ENCODE measurements at regions of chr2 and their contacts with region 1.

Region 1: DNA sequence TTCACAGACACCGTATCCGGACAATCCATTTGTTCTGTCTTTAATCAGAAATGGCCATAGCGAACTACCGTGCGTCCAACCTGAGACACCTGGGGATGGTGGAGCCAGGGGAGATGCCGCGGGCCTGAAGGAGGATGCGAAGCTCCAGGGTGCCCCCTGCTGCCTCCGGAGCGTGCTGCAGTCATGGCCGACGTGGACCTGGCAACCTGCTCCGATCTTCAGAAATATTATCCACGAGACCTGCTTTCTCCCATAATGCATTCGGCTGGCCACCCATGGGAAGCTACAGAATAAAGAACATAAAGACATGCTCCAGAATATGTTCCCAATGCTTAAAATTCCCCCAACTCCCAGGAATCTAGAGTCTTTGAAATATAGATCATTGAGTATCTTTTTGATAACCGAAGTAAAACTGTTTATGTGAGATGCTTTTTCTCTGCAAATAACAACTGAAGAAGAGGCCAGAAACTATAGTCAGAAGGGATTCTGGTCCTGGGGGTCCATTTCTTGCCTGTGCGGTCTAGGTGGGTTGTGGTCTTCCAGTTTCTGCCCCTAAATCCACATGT is 30.7 kb upstream of the SLC66A3 start:
- DNase-seq: no peak
- H3K4me3 ChIP-seq: no peak overlapping the region
- H3K27ac ChIP-seq: no peak overlapping the region
- H3K27me3 ChIP-seq: no peaks in the 10 kb centered on the region
- CTCF ChIP-seq: peak; percentile 95

Region 2: DNA sequence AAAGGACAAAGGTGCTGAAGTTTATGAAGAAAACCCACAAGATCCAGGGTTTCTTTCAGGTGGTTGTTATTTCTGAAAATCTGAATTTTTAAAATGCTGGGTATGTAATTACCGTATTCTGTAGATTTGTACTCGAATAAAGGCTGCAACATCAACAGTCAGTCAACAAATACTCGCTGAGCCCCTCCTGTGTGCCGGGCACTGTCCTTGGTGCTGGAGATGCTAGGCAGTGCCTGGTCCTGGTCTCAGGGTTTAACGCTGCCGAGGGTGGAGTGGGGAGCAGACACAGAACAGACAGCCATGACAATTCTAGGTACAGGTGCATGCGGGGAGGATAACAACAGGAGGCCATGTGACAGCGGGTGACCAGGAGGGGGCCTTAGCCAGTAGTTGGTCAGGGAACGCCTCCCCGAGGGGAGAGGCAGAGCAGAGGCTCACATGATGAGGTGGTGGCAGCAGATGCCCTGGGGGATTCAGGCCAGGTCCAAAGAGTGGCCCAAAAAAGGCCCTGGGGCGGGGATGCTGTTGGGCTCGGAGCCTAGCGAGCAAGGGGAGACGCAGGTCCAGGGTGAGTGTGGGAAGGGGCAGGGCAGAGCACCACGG is 284.7 kb before region 1 on chr2:
- CTCF ChIA-PET with region 1: interaction called, 360 read pairs
- POLR2A ChIA-PET with region 1: no interaction called
- DNase-seq: no peak
- H3K4me3 ChIP-seq: no peak overlapping the region
- H3K27ac ChIP-seq: no peak overlapping the region
- H3K27me3 ChIP-seq: peaks cover 13% of the 10 kb centered on the region
- CTCF ChIP-seq: no peak

Region 3: DNA sequence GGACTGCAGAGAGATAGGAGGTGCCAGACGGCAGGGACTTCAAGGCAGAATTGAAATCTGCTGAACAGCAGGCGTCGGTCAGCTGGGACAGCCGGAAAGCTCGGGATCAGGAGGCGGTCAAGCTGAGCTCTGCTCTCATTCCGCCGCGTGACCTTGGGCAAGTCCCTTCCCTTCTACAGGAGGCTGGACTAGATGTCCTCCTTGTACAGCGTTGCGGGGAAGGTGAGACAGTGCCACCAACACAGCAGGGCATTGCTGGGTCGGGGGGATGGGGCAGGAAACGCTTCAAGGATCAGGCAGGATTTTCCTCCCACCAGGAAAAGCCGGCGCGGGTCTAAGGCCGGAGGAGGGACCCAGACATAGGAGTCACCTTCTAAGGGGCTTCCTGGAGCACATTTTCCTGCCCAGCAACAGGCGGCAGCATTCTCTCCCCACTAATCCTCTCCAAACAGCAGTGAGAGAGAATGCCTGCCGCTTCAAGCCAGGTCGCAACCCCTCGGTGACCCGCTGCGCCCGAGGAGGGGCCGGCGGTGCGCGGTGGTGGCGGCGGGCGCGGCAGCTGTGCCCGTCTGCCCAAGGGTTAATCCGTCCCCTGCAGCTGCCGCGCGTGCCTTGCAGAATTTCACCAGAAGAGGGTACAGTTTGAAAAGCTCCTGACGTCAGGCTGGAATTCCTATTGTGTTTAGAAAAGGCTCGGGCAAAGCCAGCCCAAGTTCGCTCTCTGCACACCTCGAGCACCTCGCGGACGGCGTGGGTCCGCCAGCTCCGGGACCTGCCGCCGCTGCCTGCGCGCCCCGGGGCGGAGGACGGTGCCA is 213.1 kb before region 1 on chr2 and contains the start of gene KCNF1:
- CTCF ChIA-PET with region 1: interaction called, 10 read pairs
- POLR2A ChIA-PET with region 1: interaction called, 3 read pairs
- DNase-seq: no peak
- H3K4me3 ChIP-seq: peak within 1 kb of the TSS; percentile 53
- H3K27ac ChIP-seq: no peak within 1 kb of the TSS
- H3K27me3 ChIP-seq: peaks cover 6% of the 10 kb centered on the region
- CTCF ChIP-seq: peak; percentile 40
- polyA plus RNA-seq, gene KCNF1: 1.0 and 1.1 TPM in 2 replicates

Region 4: DNA sequence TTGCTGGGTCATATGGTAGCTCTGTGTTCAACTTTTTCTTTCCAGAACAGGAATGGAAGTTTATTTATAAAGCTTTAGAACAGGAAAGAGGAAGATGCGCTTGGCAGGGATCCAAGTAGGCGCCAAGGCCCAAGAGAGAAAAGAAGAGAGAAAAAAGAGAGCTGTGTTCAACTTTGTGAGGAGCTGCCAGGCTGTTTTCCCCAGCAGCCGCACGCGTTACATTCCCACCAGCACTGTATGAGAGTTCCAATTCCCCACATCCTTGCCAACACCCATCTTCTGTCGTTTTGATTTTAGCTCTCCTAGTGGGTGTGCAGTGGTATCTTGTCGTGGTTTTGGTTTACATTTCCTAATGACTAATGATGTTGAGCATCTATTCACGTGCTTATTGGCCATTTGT is 161.4 kb before region 1 on chr2:
- CTCF ChIA-PET with region 1: no interaction called
- POLR2A ChIA-PET with region 1: no interaction called
- DNase-seq: no peak
- H3K4me3 ChIP-seq: no peak overlapping the region
- H3K27ac ChIP-seq: no peak overlapping the region
- H3K27me3 ChIP-seq: no peaks in the 10 kb centered on the region
- CTCF ChIP-seq: no peak

Region 5: GRCh38 chr2:11028406-11028916 is 96.1 kb before region 1 on chr2:
- CTCF ChIA-PET with region 1: no interaction called
- POLR2A ChIA-PET with region 1: no interaction called
- DNase-seq: no peak
- H3K4me3 ChIP-seq: no peak overlapping the region
- H3K27ac ChIP-seq: no peak overlapping the region
- H3K27me3 ChIP-seq: peaks cover 15% of the 10 kb centered on the region
- CTCF ChIP-seq: no peak

Region 6: GRCh38 chr2:11753886-11754699 is 629.5 kb after region 1 on chr2:
- CTCF ChIA-PET with region 1: no interaction called
- POLR2A ChIA-PET with region 1: no interaction called
- DNase-seq: no peak
- H3K4me3 ChIP-seq: no peak overlapping the region
- H3K27ac ChIP-seq: no peak overlapping the region
- H3K27me3 ChIP-seq: no peaks in the 10 kb centered on the region
- CTCF ChIP-seq: no peak